ENCODE measurements at regions of chr20 and their contacts with region 1.

Region 1: DNA sequence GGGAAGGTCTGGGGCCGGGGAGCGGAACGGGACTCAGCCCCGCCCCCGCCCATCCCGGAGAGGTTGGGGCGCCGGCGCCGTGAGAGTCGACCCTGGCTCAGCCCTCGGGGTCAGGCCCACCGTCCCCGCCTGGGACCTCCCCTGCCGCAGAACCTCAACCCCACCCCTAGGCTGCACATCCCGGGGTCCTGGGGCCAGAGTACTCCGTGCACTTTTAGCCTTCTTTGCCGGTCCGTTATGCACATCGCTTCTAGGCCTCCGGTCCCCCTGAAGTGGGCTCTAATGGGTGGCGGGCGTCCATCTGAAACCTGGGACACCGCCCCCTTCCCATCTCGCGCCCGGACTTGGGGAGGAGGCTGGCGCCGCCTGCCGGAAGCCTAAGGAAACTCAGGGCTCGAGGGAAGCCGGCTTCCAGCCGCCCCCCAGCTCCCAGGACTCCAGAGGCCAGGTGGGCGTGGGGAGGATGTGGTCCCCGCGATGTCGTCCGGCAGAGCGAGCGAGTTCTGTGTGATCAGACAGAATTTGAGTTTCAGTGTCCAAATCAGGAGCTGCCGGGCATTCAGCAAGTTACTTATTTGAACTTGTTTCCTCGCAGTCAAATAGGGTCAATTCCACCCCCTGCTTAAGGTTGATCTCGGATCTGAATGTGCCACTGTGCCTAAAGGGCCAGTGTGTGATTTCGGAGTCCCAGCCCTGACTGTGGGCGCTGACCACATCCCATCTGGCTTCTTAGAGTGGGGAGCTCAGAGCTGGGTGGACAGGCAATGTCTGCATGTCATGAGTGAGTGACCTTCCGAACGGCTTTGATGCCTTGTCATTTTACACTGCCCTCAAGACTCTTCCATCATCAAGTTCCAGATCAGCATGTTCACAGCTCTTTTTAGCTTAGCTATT is 47.6 kb downstream of the CPXM1 start:
- DNase-seq: peak in 8 of 9 experiments; percentile 18 to 76 (median 58)
- ATAC-seq: peak; percentile 35
- H3K4me3 ChIP-seq: peak overlapping the region; percentile 53 to 57
- H3K4me3 Mint-ChIP-seq: peak overlapping the region; percentile 85
- H3K27ac ChIP-seq: no peak overlapping the region
- H3K27ac Mint-ChIP-seq: no peak overlapping the region
- H3K4me1 ChIP-seq: peaks cover 26% of the 10 kb centered on the region
- H3K4me1 Mint-ChIP-seq: peaks cover 34% of the 10 kb centered on the region
- H3K27me3 ChIP-seq: no peaks in the 10 kb centered on the region
- H3K27me3 Mint-ChIP-seq: peaks cover 12% of the 10 kb centered on the region
- CTCF ChIP-seq: peak; percentile 78

Region 2: DNA sequence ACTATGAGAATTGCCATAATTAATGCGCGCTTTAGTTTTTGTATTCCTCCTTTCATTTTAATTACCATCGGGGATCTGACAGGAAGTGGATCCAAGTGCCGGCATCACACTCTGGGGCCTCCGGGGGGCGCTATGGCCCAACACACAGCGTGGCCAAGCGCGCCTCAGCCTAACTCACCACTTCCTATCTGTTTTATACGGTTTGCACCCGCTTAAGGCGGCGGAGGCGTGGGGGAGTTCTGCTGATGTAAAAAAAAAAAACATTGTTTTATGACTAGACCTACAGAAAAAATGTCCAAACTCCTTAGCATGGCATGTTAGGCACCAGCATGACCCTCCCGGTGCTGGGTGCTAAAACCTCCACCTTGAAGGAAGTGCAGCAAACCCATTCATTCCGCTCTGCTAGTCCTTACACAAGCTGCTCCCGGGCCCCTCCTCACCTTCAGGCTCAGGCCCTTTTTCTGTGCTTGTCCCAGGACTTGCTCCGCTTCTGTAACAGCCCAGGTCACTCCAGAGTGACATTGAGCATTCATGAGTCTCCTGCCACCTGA is 64.7 kb before region 1 on chr20:
- CTCF ChIA-PET with region 1: interaction called, 51 read pairs
- POLR2A ChIA-PET with region 1: interaction called, 3 read pairs
- intact Hi-C with region 1: loop called (anchors 1 kb)
- DNase-seq: peak; percentile 58 to 91 (median 83)
- ATAC-seq: peak; percentile 94
- H3K4me3 ChIP-seq: no peak overlapping the region
- H3K4me3 Mint-ChIP-seq: peak overlapping the region; percentile 37
- H3K27ac ChIP-seq: peak overlapping the region in 1 of 2 experiments; percentile 23
- H3K27ac Mint-ChIP-seq: no peak overlapping the region
- H3K4me1 ChIP-seq: peaks cover 20% of the 10 kb centered on the region
- H3K4me1 Mint-ChIP-seq: peaks cover 27% of the 10 kb centered on the region
- H3K27me3 ChIP-seq: no peaks in the 10 kb centered on the region
- H3K27me3 Mint-ChIP-seq: peaks cover 11% of the 10 kb centered on the region
- CTCF ChIP-seq: peak; percentile 91

Region 3: DNA sequence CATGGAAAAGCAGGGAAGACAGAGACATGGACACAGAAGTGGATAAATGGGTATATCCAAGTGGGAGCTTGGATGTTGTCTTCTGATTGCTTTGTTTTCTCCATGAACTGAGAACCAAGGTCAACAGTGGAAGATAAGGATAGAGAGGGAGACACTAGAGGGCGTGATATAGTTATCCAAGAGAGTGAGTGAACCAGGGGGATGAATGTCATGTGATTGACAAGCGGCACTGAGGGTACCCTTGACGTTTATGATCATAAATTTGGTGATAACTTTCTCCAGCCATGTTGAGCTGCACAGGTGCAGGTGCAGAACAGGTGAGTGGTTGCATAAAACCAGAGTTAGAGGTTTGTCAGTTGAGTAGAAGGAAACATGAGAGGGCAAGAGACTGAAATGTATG is 39.5 kb before region 1 on chr20:
- CTCF ChIA-PET with region 1: interaction called, 449 read pairs
- POLR2A ChIA-PET with region 1: interaction called, 9 read pairs
- intact Hi-C with region 1: loop called (anchors 1 to 2 kb)
- DNase-seq: peak in 3 of 9 experiments; percentile 24 to 75 (median 65)
- ATAC-seq: peak; percentile 73
- H3K4me3 ChIP-seq: no peak overlapping the region
- H3K4me3 Mint-ChIP-seq: no peak overlapping the region
- H3K27ac ChIP-seq: no peak overlapping the region
- H3K27ac Mint-ChIP-seq: no peak overlapping the region
- H3K4me1 ChIP-seq: peaks cover 10% of the 10 kb centered on the region
- H3K4me1 Mint-ChIP-seq: no peaks in the 10 kb centered on the region
- H3K27me3 ChIP-seq: no peaks in the 10 kb centered on the region
- H3K27me3 Mint-ChIP-seq: no peaks in the 10 kb centered on the region
- CTCF ChIP-seq: peak; percentile 34

Region 4: GRCh38 chr20:2736441-2736840 is 16.4 kb before region 1 on chr20:
- CTCF ChIA-PET with region 1: interaction called, 24 read pairs
- POLR2A ChIA-PET with region 1: interaction called, 20 read pairs
- intact Hi-C with region 1: no loop called
- DNase-seq: no peak
- ATAC-seq: no peak
- H3K4me3 ChIP-seq: no peak overlapping the region
- H3K4me3 Mint-ChIP-seq: no peak overlapping the region
- H3K27ac ChIP-seq: no peak overlapping the region
- H3K27ac Mint-ChIP-seq: no peak overlapping the region
- H3K4me1 ChIP-seq: peaks cover 29% of the 10 kb centered on the region
- H3K4me1 Mint-ChIP-seq: peaks cover 30% of the 10 kb centered on the region
- H3K27me3 ChIP-seq: no peaks in the 10 kb centered on the region
- H3K27me3 Mint-ChIP-seq: no peaks in the 10 kb centered on the region
- CTCF ChIP-seq: no peak

Region 5: DNA sequence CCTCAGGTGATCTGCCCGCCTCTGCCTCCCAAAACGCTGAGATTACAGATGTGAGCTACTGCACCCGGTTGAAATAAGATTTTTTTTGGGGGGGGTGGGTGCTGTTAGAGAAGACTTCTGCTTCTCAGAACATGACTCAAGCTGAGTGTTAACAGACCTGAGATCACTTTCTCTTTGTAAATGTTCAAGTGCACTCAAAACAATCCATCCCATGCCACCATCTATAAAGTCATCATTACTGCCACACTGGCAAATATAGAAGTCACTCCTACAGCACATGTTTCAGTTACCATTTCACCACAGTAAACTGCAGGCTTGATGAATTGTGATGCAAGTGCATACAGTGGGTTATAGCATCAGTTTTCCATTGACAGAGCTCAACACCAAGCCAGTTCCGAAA is 96.7 kb after region 1 on chr20:
- CTCF ChIA-PET with region 1: interaction called, 4 read pairs
- POLR2A ChIA-PET with region 1: no interaction called
- intact Hi-C with region 1: loop called (anchors 5 kb)
- DNase-seq: no peak
- ATAC-seq: no peak
- H3K4me3 ChIP-seq: no peak overlapping the region
- H3K4me3 Mint-ChIP-seq: no peak overlapping the region
- H3K27ac ChIP-seq: no peak overlapping the region
- H3K27ac Mint-ChIP-seq: no peak overlapping the region
- H3K4me1 ChIP-seq: peaks cover 18% of the 10 kb centered on the region
- H3K4me1 Mint-ChIP-seq: peaks cover 35% of the 10 kb centered on the region
- H3K27me3 ChIP-seq: no peaks in the 10 kb centered on the region
- H3K27me3 Mint-ChIP-seq: no peaks in the 10 kb centered on the region
- CTCF ChIP-seq: no peak